Calu3 (cell line): ENCODE measurements at regions of chr7 and their contacts with region 1.

Region 1: DNA sequence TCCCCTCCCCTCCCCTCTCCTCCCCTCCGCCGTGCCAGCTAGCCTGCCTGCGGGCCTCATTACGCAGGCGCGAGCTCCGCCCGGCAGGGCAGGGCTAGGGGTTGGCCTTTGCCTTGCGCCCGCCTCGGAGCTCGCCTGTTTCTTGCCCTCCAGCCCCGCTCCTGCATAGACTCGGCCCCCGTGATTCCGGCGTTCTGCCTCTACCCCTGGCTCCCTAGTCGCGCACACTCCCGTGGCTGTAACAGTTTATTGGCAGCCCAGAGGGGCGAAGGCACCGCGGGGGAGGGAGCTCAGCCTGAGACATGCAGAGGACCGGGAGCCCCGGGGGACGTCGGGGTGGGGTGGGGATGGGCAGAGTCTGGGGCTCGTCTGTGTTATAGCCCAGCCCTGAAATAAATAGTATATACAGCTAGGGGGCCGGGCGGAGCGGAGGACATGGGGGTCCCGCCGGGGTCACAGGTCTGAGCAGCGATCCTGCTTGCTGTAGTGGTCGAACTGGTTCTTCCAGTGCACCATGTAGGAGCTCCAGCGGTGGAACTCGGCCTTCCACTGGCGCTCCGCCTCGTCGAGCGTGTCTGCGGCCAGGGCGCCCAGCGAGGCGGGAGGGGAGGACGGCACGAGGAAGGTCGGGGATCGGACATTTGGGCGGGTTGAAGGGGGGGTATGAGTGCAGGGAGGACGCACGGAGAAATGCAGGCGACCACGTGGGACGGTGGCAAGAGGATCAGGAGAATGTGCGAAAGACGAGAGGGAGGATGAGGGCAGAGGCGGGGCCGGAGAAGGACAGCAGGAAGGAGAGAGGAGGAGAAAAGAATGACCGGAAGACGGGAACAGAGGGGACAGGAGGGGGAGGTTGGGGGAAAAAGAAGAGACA is 483 bp upstream of the UFSP1 start:
- DNase-seq: peak; percentile 88
- H3K4me3 Mint-ChIP-seq: peak overlapping the region; percentile 67
- H3K27ac Mint-ChIP-seq: peak overlapping the region; percentile 61
- H3K4me1 Mint-ChIP-seq: peaks cover 18% of the 10 kb centered on the region
- H3K27me3 Mint-ChIP-seq: no peaks in the 10 kb centered on the region
- CTCF ChIP-seq: no peak

Region 2: DNA sequence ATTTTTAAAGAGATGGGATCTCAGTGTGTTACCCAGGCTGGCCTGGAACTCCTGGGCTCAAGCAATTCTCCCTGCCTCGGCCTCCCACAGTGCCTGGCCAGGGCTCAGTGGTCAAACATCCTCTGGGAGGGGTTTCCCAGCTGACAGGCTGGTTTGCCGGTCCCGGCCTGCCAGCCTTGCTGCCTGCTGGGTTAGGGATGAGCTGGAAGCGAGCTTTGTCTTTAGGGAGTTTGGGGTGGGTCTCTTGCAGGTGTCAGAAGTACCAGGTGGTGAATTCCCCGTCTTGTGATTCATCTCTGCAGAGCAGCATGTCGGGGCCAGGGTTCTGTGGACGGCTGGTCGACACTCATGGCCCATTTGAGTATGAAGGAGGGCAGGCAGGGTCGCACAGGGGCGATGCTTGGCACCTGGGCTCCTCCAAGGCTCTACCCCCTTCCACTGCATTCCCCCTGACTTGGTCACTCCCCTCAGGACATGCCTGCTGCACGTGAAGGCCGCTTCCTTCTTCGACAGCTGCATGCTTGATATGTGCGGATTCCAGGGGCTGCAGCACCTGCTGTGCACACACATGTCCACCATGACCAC is 126.3 kb before region 1 on chr7:
- CTCF ChIA-PET with region 1: no interaction called
- intact Hi-C with region 1: no loop called
- DNase-seq: no peak
- H3K4me3 Mint-ChIP-seq: no peak overlapping the region
- H3K27ac Mint-ChIP-seq: no peak overlapping the region
- H3K4me1 Mint-ChIP-seq: no peaks in the 10 kb centered on the region
- H3K27me3 Mint-ChIP-seq: peaks cover 26% of the 10 kb centered on the region
- CTCF ChIP-seq: no peak

Region 3: GRCh38 chr7:100965723-100966541 is 75.9 kb after region 1 on chr7:
- CTCF ChIA-PET with region 1: no interaction called
- intact Hi-C with region 1: loop called (anchors 10 kb)
- DNase-seq: peak; percentile 88
- H3K4me3 Mint-ChIP-seq: peak overlapping the region; percentile 67
- H3K27ac Mint-ChIP-seq: peak overlapping the region; percentile 9
- H3K4me1 Mint-ChIP-seq: no peaks in the 10 kb centered on the region
- H3K27me3 Mint-ChIP-seq: peaks cover 61% of the 10 kb centered on the region
- CTCF ChIP-seq: peak; percentile 53